ENCODE measurements at regions of chr6 and their contacts with region 1.

Region 1: DNA sequence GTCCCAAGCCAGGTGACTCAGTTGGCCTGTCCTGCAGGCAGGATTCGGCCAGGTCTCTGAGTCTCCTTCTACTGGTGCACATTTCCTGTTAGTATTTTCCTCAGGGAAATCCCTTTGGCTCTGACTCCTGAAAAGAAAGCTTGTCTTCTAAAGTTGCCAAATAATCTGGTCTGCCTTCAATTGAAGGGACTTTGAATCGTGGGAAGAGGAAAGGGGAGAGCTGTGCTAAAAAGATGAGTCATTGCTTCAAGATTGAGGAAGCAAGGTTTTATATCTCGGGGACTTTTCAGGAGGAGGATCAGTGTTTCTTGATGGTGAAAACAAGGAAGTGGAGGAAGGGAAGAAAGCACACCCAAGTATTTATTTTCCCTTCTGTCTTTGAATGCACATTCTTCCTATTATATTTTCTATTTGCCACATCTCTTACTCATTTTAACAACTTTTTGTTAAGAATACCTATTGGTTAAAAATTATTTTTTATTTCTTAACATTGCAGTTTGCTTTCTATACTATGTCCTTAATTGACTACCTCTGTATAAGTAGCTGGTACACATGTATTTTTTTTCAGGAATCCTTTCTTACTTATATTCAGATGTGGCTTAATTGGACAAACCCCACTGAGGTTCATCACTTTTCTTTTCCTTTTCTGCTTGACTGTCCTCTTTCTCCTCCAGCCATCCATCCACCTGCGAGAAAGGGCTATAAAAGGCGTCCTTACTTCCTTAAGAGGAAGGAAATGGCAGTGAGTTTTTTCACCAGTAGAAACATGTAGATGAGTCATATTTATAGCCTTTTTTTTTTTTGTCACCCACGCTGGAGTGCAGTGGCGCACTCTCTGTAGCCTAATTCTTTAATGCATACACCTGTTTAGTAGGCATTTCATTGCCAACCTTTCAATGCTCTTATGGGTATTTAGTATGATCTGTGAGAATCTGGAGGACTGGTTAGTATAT is 15.0 kb upstream of the IFNGR1 start:
- DNase-seq: peak; percentile 41 to 52 (median 43)
- H3K4me3 ChIP-seq: no peak overlapping the region
- H3K4me3 Mint-ChIP-seq: peak overlapping the region in 7 of 8 donors; percentile 57 to 87 (median 72)
- H3K27ac ChIP-seq: no peak overlapping the region
- H3K27ac Mint-ChIP-seq: peak overlapping the region; percentile 31 to 90 (median 87)
- H3K4me1 ChIP-seq: peaks cover 60% of the 10 kb centered on the region
- H3K4me1 Mint-ChIP-seq: peaks cover 43 to 70% (median 61%) of the 10 kb centered on the region in 4 donors
- H3K27me3 ChIP-seq: no peaks in the 10 kb centered on the region
- H3K27me3 Mint-ChIP-seq: no peaks in the 10 kb centered on the region

Region 2: DNA sequence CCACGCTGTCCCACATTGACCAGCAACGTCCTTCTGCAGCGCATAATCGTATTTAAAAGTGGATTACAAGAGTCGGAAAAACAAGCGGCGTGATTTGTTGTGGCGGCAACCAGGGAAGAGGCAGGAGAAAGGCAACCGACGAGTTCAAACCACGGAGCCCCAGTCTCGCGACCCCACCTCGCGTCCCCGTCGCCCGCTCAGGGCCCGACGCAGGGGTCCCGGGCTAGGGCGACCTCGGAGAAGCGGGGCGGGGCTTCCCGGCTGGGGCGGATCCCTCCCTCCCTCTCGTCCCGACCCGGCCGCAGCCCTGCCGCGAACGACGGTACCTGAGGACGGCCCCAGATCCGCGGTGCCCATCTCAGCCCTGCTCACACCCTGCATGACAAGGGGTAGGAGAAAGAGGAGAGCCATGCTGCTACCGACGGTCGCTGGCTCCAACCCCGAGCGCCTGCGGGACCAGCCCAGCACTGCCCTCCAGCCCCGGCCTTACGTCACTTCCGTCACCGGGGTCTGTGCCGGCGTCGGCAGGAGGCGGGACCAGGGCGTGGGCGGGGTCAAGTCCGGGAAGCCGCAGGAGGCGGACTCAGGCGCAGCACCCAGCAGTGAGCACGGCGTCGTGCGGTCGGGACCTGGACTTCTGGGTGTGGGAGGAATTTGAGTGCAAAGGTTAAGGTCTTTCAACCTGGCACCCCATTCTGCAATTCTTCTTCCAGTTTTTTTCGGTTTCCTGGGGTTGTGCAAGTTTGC is 15.1 kb before region 1 on chr6 and contains the start of gene IFNGR1:
- CTCF ChIA-PET with region 1: interaction called, 7 read pairs
- POLR2A ChIA-PET with region 1: interaction called, 66 read pairs
- intact Hi-C with region 1: loop called (anchors 1 kb)
- DNase-seq: peak; percentile 93 to 94 (median 94)
- H3K4me3 ChIP-seq: peak within 1 kb of the TSS; percentile 86 to 87
- H3K4me3 Mint-ChIP-seq: peak within 1 kb of the TSS; percentile 93 to 100 (median 97)
- H3K27ac ChIP-seq: peak within 1 kb of the TSS; percentile 96
- H3K27ac Mint-ChIP-seq: peak within 1 kb of the TSS; percentile 93 to 100 (median 98)
- H3K4me1 ChIP-seq: peaks cover 63% of the 10 kb centered on the region
- H3K4me1 Mint-ChIP-seq: peaks cover 45 to 74% (median 57%) of the 10 kb centered on the region in 4 donors
- H3K27me3 ChIP-seq: no peaks in the 10 kb centered on the region
- H3K27me3 Mint-ChIP-seq: peaks cover 0 to 1% of the 10 kb centered on the region in 2 donors
- total RNA-seq, gene IFNGR1: 38.3 to 38.8 TPM

Region 3: GRCh38 chr6:137264311-137265075 is 30.3 kb after region 1 on chr6:
- CTCF ChIA-PET with region 1: interaction called, 3 read pairs
- POLR2A ChIA-PET with region 1: no interaction called
- intact Hi-C with region 1: loop called (anchors 5 kb)
- DNase-seq: no peak
- H3K4me3 ChIP-seq: no peak overlapping the region
- H3K4me3 Mint-ChIP-seq: no peak overlapping the region
- H3K27ac ChIP-seq: no peak overlapping the region
- H3K27ac Mint-ChIP-seq: no peak overlapping the region
- H3K4me1 ChIP-seq: peaks cover 19% of the 10 kb centered on the region
- H3K4me1 Mint-ChIP-seq: peaks cover 9 to 36% (median 23%) of the 10 kb centered on the region in 4 donors
- H3K27me3 ChIP-seq: no peaks in the 10 kb centered on the region
- H3K27me3 Mint-ChIP-seq: peaks cover 1 to 3% of the 10 kb centered on the region in 2 donors

Measured in CD4-positive, alpha-beta memory T cell (primary cell).